ENCODE measurements at regions of chr14 and their contacts with region 1.

Region 1: DNA sequence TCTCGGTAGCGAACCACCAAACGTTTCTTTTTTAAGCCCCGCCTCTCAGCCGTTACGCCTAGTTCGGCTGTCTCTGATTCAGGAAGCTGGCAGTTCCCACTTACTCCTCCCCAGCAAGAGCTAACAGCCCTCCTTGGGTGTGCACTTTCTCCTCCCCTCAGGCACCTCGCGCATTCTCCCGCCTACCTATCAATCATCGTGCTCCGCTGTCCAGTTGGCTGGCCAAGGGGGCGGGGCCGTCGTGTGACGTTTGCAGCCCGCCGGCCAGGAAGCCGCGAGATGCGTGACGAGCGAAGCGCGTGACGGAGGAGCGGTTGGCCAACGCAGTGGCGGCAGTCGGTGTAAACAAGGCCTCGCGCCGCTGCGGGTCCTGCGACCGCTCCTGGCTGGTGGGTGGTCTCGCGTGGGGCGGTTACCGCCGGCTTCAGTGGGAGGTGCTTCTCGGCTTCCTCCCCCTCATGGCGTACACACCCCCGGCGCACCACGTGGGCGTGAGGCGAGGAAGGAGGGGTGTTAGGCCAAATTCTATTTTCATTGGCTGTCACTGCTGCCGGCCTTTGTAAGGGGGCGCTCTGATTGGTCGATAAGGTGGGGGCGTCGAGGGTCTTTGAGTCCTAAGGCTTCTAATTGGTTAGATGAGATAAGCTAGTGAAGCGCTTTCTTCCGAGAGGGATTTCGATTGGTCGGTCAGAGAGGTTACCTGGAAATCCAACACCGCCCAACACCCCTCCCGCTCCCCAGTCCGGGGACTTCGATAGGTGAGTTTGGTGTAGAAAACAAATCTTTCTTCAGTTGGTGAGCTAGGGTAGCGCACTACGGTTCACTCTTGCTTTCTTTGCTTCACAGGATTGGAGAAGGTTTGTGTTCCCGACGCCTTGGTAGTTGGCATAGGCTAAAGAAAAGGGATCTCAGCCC is at the starts of genes DCAF11 and NRL:
- DNase-seq: peak; percentile 88 to 97 (median 93)
- ATAC-seq: peak; percentile 91
- H3K4me3 ChIP-seq: peak within 1 kb of the TSS; percentile 51
- H3K27ac ChIP-seq: peak within 1 kb of the TSS; percentile 95
- H3K4me1 ChIP-seq: peaks cover 10% of the 10 kb centered on the region in 2 experiments; a peak in 4 of 5 replicates
- H3K27me3 ChIP-seq: no peaks in the 10 kb centered on the region
- CTCF ChIP-seq: no peak
- EP300 ChIP-seq: no peak; the same call in 1 of the 2 replicates
- POLR2A ChIP-seq: no peak
- RAD21 ChIP-seq: no peak
- polyA plus RNA-seq, gene DCAF11: 8.5 to 9.2 TPM
- polyA plus RNA-seq, gene NRL: 0.07 TPM in 1 of 2 experiments, not detected in the other

Region 2: DNA sequence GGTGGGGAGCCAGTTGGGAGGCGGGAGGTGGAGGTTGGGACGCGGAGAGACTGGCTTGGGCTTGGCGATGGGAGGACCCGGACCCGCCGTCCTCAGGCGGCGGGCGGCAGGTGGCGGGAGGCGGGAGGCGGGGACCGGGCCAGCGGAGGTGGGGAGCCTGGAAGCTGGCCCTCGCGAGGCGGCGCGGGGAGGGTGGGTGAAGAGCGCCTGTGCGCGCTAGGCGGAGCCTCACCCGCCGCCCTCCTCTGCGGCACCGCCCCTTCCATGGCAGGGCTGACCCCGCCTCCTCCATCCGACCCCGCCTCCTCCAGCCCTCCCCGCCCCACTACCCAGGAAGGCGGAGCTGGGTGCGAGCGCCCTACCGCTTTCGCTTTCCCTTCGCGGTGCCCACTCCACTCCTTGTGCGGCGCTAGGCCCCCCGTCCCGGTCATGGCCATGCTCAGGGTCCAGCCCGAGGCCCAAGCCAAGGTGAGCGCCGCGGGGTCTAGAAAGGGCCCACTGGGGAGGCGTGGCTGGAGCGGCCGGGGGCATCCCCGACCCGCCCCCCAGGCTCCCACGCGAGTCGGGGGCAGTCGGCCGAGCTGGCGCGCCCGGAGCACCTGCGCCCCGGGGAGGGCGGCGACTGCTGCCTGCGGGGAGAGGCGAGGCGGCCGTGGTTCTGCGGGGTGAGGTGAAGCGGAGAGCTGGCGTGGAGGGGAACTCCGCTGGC is 21.2 kb after region 1 on chr14 and contains the start of gene PSME1:
- CTCF ChIA-PET with region 1: no interaction called
- POLR2A ChIA-PET with region 1: interaction called, 15 read pairs
- in situ Hi-C with region 1: no loop called
- intact Hi-C with region 1: no loop called
- DNase-seq: peak; percentile 91 to 95 (median 92)
- ATAC-seq: peak; percentile 97
- H3K4me3 ChIP-seq: peak within 1 kb of the TSS; percentile 92
- H3K27ac ChIP-seq: peak within 1 kb of the TSS; percentile 76
- H3K4me1 ChIP-seq: peaks cover 7 to 33% of the 10 kb centered on the region in 2 experiments; a peak in 4 of 5 replicates
- H3K27me3 ChIP-seq: no peaks in the 10 kb centered on the region
- CTCF ChIP-seq: no peak
- EP300 ChIP-seq: no peak
- POLR2A ChIP-seq: peak; percentile 58
- RAD21 ChIP-seq: no peak
- polyA plus RNA-seq, gene PSME1: 163 to 180 TPM

Region 3: DNA sequence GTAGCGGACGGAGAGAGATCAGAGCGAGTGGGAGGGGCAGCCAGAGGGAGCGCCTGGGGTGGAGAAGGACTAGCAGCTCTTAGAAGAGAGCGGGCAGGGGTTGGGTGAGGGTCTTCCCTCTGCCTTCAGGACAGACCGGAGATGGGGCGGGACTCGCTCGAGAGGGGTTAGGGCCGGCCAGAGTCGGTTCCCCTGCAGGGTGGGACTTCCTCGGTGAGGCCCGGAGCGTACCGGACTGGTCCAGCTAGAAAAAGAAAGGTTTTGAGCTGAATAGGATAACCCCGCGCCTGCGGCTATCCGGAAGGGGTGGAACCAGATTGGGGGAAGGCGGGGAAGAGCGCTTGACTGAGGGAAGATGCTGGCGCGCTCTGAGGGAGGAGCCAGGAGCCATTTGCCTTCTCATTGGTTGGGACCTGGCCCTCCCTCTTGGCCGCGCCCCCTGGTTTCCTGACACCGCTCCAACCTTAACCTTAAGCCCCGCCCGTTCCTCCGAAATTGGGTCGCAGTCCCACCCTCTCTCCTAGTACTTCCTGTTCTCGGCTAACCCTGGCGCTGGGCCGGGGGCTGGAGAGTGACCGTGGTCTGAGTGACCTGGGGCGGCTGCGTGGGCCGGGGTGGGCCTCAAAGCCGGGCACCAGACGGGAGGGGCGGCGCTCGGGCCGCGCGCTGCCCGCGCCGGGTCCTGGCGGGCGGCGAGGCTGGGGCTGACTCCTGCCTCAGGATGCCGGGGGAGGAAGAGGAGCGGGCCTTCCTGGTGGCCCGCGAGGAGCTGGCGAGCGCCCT is 32.4 kb after region 1 on chr14 and contains the start of gene RNF31:
- CTCF ChIA-PET with region 1: no interaction called
- POLR2A ChIA-PET with region 1: interaction called, 5 read pairs
- in situ Hi-C with region 1: no loop called
- intact Hi-C with region 1: loop called (anchors 2 kb)
- DNase-seq: peak; percentile 85 to 97 (median 90)
- ATAC-seq: peak; percentile 95
- H3K4me3 ChIP-seq: peak within 1 kb of the TSS; percentile 98
- H3K27ac ChIP-seq: peak within 1 kb of the TSS; percentile 72
- H3K4me1 ChIP-seq: peaks cover 31 to 44% of the 10 kb centered on the region in 2 experiments; a peak in 4 of 5 replicates
- H3K27me3 ChIP-seq: no peaks in the 10 kb centered on the region
- CTCF ChIP-seq: no peak
- EP300 ChIP-seq: no peak
- POLR2A ChIP-seq: peak; percentile 55; the same call in 1 of the 2 replicates
- RAD21 ChIP-seq: no peak
- polyA plus RNA-seq, gene RNF31: 3.1 to 6.1 TPM

Region 4: DNA sequence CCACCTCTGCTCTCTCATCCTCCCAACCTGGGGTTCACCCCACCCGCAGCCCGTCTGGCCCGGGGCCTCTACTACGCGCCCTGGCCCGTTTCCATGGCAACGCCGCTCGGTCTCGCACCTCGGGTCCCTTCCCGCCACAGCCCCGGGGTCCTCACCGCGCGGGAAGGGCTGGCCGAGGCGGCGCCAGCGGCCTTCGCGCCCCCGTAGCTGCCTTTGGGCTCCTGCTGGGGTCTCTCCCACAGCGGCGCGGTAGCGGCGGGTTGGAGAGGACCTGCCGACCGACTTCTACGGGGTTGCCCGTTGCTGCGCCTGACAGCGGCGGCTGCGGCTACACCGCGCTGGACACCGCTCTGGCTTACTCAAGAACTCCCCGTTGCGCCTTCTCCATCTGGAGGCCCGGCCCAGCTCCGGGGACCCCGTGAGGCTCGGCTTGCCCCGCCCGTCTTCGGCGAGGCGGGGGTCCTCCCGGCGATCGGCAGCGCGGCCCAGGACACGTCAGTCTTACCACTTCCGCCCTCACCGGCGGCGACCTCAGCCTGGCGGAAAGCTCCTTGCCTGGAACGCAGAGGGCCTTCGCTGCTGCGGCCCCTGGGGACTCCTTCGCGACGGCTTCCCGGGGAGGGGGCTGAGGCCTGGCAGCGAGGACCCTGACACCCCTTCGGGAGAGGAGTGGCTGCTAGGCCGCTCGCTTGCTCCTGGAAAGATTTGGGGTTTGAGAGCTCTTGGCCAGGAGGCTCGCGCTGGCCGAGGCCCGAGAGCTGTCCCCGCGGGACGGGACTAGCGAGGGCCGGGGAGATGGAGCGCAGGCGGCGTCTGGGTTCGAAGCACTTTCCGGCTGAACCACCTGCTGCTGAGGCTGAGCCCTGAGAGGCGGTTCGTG is 80.6 kb after region 1 on chr14 and contains the start of gene TM9SF1:
- CTCF ChIA-PET with region 1: no interaction called
- POLR2A ChIA-PET with region 1: no interaction called
- in situ Hi-C with region 1: no loop called
- intact Hi-C with region 1: no loop called
- DNase-seq: peak; percentile 81 to 89 (median 84)
- ATAC-seq: peak; percentile 95
- H3K4me3 ChIP-seq: peak within 1 kb of the TSS; percentile 67
- H3K27ac ChIP-seq: peak within 1 kb of the TSS; percentile 97
- H3K4me1 ChIP-seq: peaks cover 6 to 13% of the 10 kb centered on the region in 2 experiments; a peak in 3 of 5 replicates
- H3K27me3 ChIP-seq: no peaks in the 10 kb centered on the region
- CTCF ChIP-seq: no peak; a peak in 1 of 6 replicates
- EP300 ChIP-seq: no peak
- POLR2A ChIP-seq: peak; percentile 80
- RAD21 ChIP-seq: no peak
- polyA plus RNA-seq, gene TM9SF1: 5.3 to 6.3 TPM

Measured in K562 (cell line).